Activated T-helper 1 cell treated with anti-CD3 and anti-CD28 coated beads, Interleukin-12 subunit alpha, Interleukin-12 subunit beta, Interleukin-2, Interleukin-4 antibody, amounts not matched to agents 30 ng/mL and 10 ng/mL and 1 ng/mL, durations not matched to agents 14 hours and 24 hours and 36 hours (primary cell): ENCODE measurements at regions of chr6 and their contacts with region 1.

Region 1: DNA sequence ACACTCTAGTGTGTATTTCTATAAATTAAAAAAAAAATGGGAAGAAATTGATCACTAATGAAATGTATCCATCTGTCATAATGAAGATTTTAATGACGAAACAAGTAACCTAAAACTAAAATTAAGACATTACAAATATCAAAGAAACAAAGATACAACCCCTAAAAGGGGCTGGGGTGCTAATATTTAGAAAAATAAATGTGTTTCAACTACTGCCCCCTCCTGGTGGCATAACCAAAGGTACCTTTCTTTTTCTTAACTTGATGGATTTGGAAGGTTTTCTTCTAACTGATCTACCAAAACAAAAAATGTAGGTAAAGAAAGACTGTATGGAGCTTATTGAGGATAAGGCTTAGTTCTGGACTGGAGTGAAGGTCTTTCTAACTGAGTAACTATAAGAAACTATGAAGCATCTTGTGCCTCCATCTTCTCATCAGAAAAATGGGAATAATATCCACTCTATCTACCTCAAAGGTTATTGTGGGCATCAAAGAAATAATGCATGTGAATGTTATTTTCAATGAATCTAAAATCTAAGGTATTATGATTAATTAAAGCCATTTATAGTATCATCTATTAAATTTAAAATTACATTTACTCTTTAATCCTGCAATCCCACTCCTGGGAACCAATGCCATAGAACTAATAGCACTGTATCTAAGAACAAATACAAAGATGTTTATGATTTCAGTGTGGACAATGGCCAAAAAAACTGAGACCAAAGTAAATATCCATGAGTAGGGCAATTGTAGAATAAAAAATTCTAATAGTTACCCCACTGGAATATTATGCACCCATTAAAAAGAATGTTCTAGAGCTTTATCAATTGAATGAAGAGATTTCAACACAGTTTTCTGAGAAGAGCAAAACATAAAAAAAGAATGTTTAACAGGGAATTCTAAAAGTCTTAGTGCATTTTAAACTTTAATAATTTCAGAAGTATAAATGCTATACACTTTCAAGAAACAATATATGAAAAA is 117.2 kb downstream of the BACH2 start:
- DNase-seq: no peak
- H3K4me3 Mint-ChIP-seq: no peak overlapping the region
- H3K27ac Mint-ChIP-seq: no peak overlapping the region
- H3K4me1 Mint-ChIP-seq: peaks cover 69% of the 10 kb centered on the region
- H3K27me3 Mint-ChIP-seq: no peaks in the 10 kb centered on the region

Region 2: DNA sequence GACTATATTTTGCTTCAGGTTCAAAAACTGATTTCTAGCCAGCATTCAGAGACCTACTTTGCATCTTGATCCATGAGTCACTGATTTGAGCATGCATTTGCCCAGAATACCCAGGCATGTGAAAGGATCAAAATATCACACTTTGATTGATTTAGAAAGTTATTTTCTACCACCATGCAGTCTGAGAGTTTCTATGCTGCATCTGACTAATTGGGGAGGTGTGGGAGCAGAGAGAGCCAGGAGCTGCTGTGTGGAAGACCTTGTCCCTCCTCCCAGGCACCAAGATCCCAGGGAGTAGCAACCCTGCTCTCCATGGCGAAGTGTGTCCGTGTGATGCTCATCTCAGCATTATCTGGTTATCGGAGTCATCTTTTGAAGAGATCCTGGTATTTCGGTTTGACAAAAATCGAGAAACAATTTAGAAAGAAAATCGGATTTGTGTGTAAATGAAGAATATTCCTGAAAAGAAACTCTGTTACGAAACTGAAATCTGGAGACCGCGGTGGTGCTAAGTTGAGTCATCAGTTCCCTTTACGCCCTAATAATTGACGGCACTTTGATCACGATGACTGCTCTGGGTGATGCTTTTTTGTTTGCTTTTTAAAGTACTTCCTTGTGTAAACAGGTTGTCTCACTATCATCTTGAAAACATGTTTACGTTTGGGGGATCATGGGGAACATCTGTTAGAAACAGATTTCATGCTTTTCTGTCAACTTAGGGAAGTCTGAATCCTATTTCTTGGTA is 76.3 kb before region 1 on chr6:
- intact Hi-C with region 1: loop called (anchors 1 kb)
- DNase-seq: no peak
- H3K4me3 Mint-ChIP-seq: peak overlapping the region; percentile 79
- H3K27ac Mint-ChIP-seq: peak overlapping the region; percentile 88
- H3K4me1 Mint-ChIP-seq: peaks cover 70% of the 10 kb centered on the region
- H3K27me3 Mint-ChIP-seq: no peaks in the 10 kb centered on the region

Region 3: GRCh38 chr6:90127595-90127994 is 51.9 kb before region 1 on chr6:
- intact Hi-C with region 1: loop called (anchors 1 kb)
- DNase-seq: no peak
- H3K4me3 Mint-ChIP-seq: no peak overlapping the region
- H3K27ac Mint-ChIP-seq: no peak overlapping the region
- H3K4me1 Mint-ChIP-seq: peaks cover 64% of the 10 kb centered on the region
- H3K27me3 Mint-ChIP-seq: peaks cover 2% of the 10 kb centered on the region

Region 4: GRCh38 chr6:90156861-90157260 is 22.6 kb before region 1 on chr6:
- intact Hi-C with region 1: loop called (anchors 2 kb)
- DNase-seq: peak; percentile 36
- H3K4me3 Mint-ChIP-seq: peak overlapping the region; percentile 44
- H3K27ac Mint-ChIP-seq: peak overlapping the region; percentile 81
- H3K4me1 Mint-ChIP-seq: peaks cover 59% of the 10 kb centered on the region
- H3K27me3 Mint-ChIP-seq: peaks cover 2% of the 10 kb centered on the region

Region 5: DNA sequence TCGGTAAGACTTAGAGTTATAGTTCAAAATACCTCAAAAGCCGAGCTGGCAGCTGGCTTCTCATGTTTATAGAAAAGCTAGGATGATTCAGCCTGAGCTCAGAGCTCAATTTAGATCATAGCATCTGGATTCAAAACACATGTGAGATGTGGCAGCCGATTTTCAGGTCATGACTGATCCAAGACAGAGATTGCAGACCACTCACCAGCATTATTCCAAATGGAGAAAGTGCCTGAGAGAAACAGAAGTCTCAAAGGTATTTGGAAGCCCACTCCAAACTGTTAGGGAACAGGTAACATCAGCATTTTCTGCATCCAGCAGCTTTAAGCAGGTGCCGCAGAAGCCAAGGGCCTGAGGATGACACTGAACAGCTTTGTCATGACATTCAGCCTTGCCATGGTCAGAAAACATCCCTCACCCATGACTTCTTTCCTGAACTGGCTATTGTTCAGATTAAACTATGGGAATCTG is 14.9 kb after region 1 on chr6:
- intact Hi-C with region 1: loop called (anchors 2 kb)
- DNase-seq: no peak
- H3K4me3 Mint-ChIP-seq: peak overlapping the region; percentile 38
- H3K27ac Mint-ChIP-seq: peak overlapping the region; percentile 54
- H3K4me1 Mint-ChIP-seq: peaks cover 68% of the 10 kb centered on the region
- H3K27me3 Mint-ChIP-seq: peaks cover 2% of the 10 kb centered on the region

Region 6: GRCh38 chr6:90216072-90216977 is 36.8 kb after region 1 on chr6:
- intact Hi-C with region 1: no loop called
- DNase-seq: no peak
- H3K4me3 Mint-ChIP-seq: peak overlapping the region; percentile 21
- H3K27ac Mint-ChIP-seq: peak overlapping the region; percentile 53
- H3K4me1 Mint-ChIP-seq: peaks cover 30% of the 10 kb centered on the region
- H3K27me3 Mint-ChIP-seq: peaks cover 2% of the 10 kb centered on the region

Region 7: DNA sequence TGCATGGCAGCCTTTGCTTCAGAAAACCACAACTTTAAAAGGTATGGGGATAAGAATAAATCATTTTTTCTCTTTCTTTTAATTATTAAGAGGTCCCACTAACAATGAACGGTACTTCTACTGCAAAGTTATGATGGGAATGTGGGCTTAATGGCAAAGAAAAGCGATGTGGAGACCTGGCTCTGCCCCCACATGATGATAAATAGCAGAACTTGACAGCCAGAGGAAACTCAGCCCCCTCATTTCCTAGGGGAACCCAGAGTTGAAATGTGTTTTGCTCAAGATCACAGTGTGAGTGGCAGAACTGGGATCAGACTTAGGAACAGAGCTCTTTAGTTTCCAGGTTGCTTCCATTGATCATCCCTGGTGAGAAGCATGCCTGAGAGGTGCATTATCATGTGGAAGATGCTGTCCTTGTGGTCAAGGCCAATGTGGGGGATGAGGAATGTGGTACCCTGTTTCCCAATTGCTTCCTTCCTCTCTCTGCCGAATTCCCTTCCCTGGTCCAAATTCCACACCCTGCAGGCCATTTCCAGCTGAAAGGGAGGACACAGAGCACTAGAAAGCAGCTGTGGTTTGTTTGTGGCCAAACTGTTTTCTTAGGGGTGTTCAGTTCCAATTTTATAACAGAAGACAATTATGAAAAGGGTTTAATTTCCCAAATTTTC is 51.2 kb after region 1 on chr6:
- intact Hi-C with region 1: loop called (anchors 5 kb)
- DNase-seq: no peak
- H3K4me3 Mint-ChIP-seq: peak overlapping the region; percentile 10
- H3K27ac Mint-ChIP-seq: peak overlapping the region; percentile 31
- H3K4me1 Mint-ChIP-seq: peaks cover 89% of the 10 kb centered on the region
- H3K27me3 Mint-ChIP-seq: no peaks in the 10 kb centered on the region